GM12878 (cell line): ENCODE measurements at regions of chr9 and their contacts with region 1.

Region 1: GRCh38 chr9:97468658-97469448 is 32.6 kb upstream of the TMOD1 start:
- DNase-seq: peak; percentile 59
- ATAC-seq: peak; percentile 99
- H3K4me3 ChIP-seq: no peak overlapping the region; the same call in 1 of the 2 replicates
- H3K27ac ChIP-seq: peak overlapping the region; percentile 74
- H3K4me1 ChIP-seq: peaks cover 18% of the 10 kb centered on the region
- H3K27me3 ChIP-seq: no peaks in the 10 kb centered on the region
- CTCF ChIP-seq: peak; percentile 83 to 94 (median 92)
- EP300 ChIP-seq: no peak
- POLR2A ChIP-seq: no peak
- RAD21 ChIP-seq: peak; percentile 97

Region 2: GRCh38 chr9:96854073-96854876 is 614.6 kb before region 1 on chr9 and contains the start of gene ZNF782:
- CTCF ChIA-PET with region 1: interaction called, 46 read pairs
- POLR2A ChIA-PET with region 1: no interaction called
- RAD21 ChIA-PET with region 1: interaction called, 14 read pairs
- SMC1A ChIA-PET with region 1: interaction called, 12 read pairs
- in situ Hi-C with region 1: no loop called
- intact Hi-C with region 1: loop called (anchors 5 kb)
- DNase-seq: peak; percentile 60
- ATAC-seq: peak; percentile 96
- H3K4me3 ChIP-seq: peak within 1 kb of the TSS; percentile 83
- H3K27ac ChIP-seq: peak within 1 kb of the TSS; percentile 45
- H3K4me1 ChIP-seq: 0 out of 2 replicates have a peak, but pooled peaks cover 7% of the 10 kb centered on the region
- H3K27me3 ChIP-seq: no peaks in the 10 kb centered on the region
- CTCF ChIP-seq: no peak
- EP300 ChIP-seq: no peak
- POLR2A ChIP-seq: peak; percentile 58; the same call in 1 of the 2 replicates
- RAD21 ChIP-seq: no peak
- polyA plus RNA-seq, gene ZNF782: 0.55 to 0.82 TPM

Region 3: GRCh38 chr9:97321711-97322504 is 146.9 kb before region 1 on chr9:
- CTCF ChIA-PET with region 1: no interaction called
- POLR2A ChIA-PET with region 1: no interaction called
- RAD21 ChIA-PET with region 1: no interaction called
- SMC1A ChIA-PET with region 1: no interaction called
- in situ Hi-C with region 1: no loop called
- intact Hi-C with region 1: no loop called
- DNase-seq: no peak
- ATAC-seq: no peak
- H3K4me3 ChIP-seq: no peak overlapping the region
- H3K27ac ChIP-seq: no peak overlapping the region
- H3K4me1 ChIP-seq: no peaks in the 10 kb centered on the region
- H3K27me3 ChIP-seq: no peaks in the 10 kb centered on the region; a peak in 2 of 4 replicates
- CTCF ChIP-seq: no peak
- EP300 ChIP-seq: no peak
- POLR2A ChIP-seq: no peak
- RAD21 ChIP-seq: no peak

Region 4: DNA sequence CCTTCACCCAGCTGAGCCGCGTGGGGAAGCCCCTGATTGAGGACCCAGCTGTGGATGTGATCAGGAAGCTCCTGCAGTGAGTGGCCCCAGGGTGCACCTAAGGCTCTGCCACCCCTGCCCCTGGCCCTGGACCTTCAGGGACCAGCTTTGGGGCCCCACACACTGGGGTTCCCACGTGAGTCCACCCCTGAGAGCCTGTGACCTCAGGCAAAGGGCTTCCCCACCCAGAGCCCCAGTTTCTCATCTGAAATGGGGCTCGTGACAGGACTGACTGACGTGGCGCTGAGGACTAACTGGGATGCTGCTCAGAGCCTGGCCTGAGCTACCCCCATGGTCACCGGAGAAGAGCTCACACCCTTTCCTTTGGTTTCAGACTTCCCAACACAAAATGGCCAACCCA is 107.0 kb before region 1 on chr9:
- CTCF ChIA-PET with region 1: no interaction called
- POLR2A ChIA-PET with region 1: no interaction called
- RAD21 ChIA-PET with region 1: no interaction called
- SMC1A ChIA-PET with region 1: no interaction called
- in situ Hi-C with region 1: no loop called
- intact Hi-C with region 1: no loop called
- DNase-seq: no peak
- ATAC-seq: no peak
- H3K4me3 ChIP-seq: no peak overlapping the region
- H3K27ac ChIP-seq: no peak overlapping the region
- H3K4me1 ChIP-seq: peaks cover 43% of the 10 kb centered on the region
- H3K27me3 ChIP-seq: no peaks in the 10 kb centered on the region; a peak in 1 of 4 replicates
- CTCF ChIP-seq: no peak
- EP300 ChIP-seq: no peak
- POLR2A ChIP-seq: no peak
- RAD21 ChIP-seq: no peak

Region 5: DNA sequence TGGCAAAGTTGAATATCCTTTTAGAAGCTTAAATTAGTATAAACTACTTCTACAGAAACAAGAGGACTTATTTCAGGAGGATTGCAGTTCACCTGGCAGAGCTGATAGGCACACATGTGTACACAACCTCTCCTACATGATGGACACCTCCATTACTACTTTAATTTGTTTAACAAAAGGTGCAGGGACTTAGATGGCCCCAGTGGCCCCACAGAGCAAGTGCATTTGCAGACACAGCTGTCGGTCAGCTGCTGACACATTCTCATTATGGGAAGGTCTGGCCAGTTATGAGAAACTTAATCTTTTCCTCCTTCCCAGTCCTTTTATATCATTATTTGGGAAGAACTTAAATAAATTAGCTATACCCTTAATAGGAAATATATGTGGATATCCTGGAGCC is 28.7 kb before region 1 on chr9:
- CTCF ChIA-PET with region 1: interaction called, 12 read pairs
- POLR2A ChIA-PET with region 1: no interaction called
- RAD21 ChIA-PET with region 1: interaction called, 4 read pairs
- SMC1A ChIA-PET with region 1: interaction called, 5 read pairs
- in situ Hi-C with region 1: no loop called
- intact Hi-C with region 1: no loop called
- DNase-seq: no peak
- ATAC-seq: no peak
- H3K4me3 ChIP-seq: no peak overlapping the region
- H3K27ac ChIP-seq: no peak overlapping the region
- H3K4me1 ChIP-seq: no peaks in the 10 kb centered on the region
- H3K27me3 ChIP-seq: no peaks in the 10 kb centered on the region
- CTCF ChIP-seq: no peak
- EP300 ChIP-seq: no peak
- POLR2A ChIP-seq: no peak
- RAD21 ChIP-seq: no peak

Region 6: GRCh38 chr9:97510797-97511761 is 42.2 kb after region 1 on chr9:
- CTCF ChIA-PET with region 1: interaction called, 247 read pairs
- POLR2A ChIA-PET with region 1: interaction called, 7 read pairs
- RAD21 ChIA-PET with region 1: interaction called, 38 read pairs
- SMC1A ChIA-PET with region 1: interaction called, 144 read pairs
- in situ Hi-C with region 1: no loop called
- intact Hi-C with region 1: no loop called
- DNase-seq: peak; percentile 84
- ATAC-seq: peak; percentile 91
- H3K4me3 ChIP-seq: peak overlapping the region; percentile 25; the same call in 1 of the 2 replicates
- H3K27ac ChIP-seq: peak overlapping the region; percentile 87
- H3K4me1 ChIP-seq: peaks cover 44% of the 10 kb centered on the region
- H3K27me3 ChIP-seq: no peaks in the 10 kb centered on the region
- CTCF ChIP-seq: no peak
- EP300 ChIP-seq: peak; percentile 63 to 93
- POLR2A ChIP-seq: no peak
- RAD21 ChIP-seq: no peak

Region 7: DNA sequence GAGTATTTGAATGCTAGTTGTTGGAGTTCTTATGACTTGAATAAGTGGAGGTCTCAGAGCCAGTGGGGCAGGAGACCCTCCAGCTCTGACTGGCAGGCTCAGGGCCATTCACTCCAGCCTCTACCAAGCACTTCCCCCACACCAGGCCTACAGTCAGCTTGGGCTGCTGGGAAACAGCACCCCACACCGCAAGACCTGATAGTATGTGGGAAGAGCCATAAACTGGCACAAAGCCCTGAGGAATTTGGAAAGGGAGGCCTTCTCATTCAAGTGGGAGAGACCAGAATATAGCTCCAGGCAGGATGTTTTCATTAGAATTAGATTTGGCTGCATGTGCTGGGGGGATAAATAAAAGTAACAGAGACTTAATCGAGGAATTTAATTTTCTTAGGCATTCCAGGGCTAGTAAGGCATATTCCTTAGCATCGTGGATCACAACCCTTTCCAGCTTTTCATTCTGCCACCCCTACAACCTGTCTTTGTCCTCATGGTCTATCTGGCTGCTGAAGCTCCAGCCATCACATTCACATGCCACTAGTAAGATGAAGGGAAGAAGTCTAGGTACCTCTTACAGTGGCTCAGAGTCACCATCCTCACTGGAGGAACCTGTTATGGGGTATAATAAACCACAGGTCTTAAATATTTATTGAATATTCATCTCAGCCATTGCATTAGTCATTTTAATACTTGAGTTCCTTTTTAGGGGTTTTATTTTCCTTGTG is 80.1 kb after region 1 on chr9:
- CTCF ChIA-PET with region 1: interaction called, 4 read pairs
- POLR2A ChIA-PET with region 1: no interaction called
- RAD21 ChIA-PET with region 1: interaction called, 4 read pairs
- SMC1A ChIA-PET with region 1: interaction called, 13 read pairs
- in situ Hi-C with region 1: no loop called
- intact Hi-C with region 1: no loop called
- DNase-seq: no peak
- ATAC-seq: no peak
- H3K4me3 ChIP-seq: no peak overlapping the region
- H3K27ac ChIP-seq: no peak overlapping the region
- H3K4me1 ChIP-seq: no peaks in the 10 kb centered on the region
- H3K27me3 ChIP-seq: no peaks in the 10 kb centered on the region
- CTCF ChIP-seq: no peak
- EP300 ChIP-seq: no peak
- POLR2A ChIP-seq: no peak
- RAD21 ChIP-seq: no peak

Region 8: DNA sequence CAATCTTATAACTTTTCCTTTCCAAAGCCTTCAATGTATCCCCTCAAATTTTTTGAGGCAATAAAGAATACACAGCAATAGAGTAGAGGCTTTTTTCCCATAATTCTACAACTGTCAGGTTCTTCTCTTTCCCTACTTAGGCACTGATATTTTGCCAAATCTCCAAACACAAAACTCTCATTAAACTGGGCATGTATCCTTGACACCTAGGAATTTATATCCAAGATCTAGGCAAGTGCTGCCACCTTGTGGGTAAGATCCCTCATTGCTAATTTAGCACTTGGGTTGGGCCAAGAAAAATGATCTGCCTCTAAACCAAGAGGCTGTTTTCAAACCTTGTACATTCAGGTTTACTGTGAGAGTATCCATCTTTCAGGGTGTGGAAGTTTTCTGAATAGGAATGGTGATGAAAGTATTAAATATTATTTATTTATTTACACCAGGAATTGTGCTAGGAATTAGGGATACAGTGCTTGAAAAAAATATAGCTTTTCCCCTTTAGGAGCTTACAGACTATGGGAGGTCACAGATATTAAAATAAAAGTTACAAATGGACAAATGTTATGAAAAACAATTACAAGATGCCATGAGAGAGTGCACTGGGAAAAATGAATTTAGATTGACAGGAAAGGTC is 146.7 kb after region 1 on chr9:
- CTCF ChIA-PET with region 1: interaction called, 515 read pairs
- POLR2A ChIA-PET with region 1: interaction called, 7 read pairs
- RAD21 ChIA-PET with region 1: interaction called, 270 read pairs
- SMC1A ChIA-PET with region 1: interaction called, 253 read pairs
- in situ Hi-C with region 1: no loop called
- intact Hi-C with region 1: loop called (anchors 1 kb)
- DNase-seq: no peak
- ATAC-seq: peak; percentile 73
- H3K4me3 ChIP-seq: no peak overlapping the region
- H3K27ac ChIP-seq: no peak overlapping the region
- H3K4me1 ChIP-seq: peaks cover 10% of the 10 kb centered on the region; the same call in 1 of the 2 replicates
- H3K27me3 ChIP-seq: no peaks in the 10 kb centered on the region
- CTCF ChIP-seq: peak; percentile 63 to 84 (median 80)
- EP300 ChIP-seq: no peak
- POLR2A ChIP-seq: no peak
- RAD21 ChIP-seq: peak; percentile 86

Region 9: DNA sequence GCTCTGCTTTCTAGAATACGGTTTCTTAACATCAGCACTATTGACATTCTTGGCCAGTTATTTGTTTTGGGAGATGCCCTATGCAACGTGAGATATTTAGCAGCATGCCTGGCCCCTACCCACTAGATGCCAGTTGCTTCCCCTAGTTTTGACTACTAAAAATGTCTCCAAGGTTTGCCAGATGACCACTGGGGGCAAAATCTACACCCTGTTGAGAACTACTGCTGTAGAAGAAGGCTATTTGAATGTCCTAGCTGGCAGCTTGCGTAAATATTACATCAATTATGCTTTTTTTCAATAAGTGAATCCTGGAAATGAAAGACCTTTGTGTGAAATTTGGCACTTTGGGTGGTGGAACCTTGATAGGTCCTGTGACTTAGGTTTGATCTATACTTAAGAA is 169.8 kb after region 1 on chr9:
- CTCF ChIA-PET with region 1: interaction called, 18 read pairs
- POLR2A ChIA-PET with region 1: interaction called, 4 read pairs
- RAD21 ChIA-PET with region 1: interaction called, 9 read pairs
- SMC1A ChIA-PET with region 1: interaction called, 13 read pairs
- in situ Hi-C with region 1: no loop called
- intact Hi-C with region 1: no loop called
- DNase-seq: no peak
- ATAC-seq: peak; percentile 75
- H3K4me3 ChIP-seq: peak overlapping the region; percentile 49; the same call in 1 of the 2 replicates
- H3K27ac ChIP-seq: no peak overlapping the region
- H3K4me1 ChIP-seq: no peaks in the 10 kb centered on the region
- H3K27me3 ChIP-seq: no peaks in the 10 kb centered on the region
- CTCF ChIP-seq: peak; percentile 16 to 41 (median 37); a peak in 4 of 6 replicates
- EP300 ChIP-seq: no peak
- POLR2A ChIP-seq: no peak
- RAD21 ChIP-seq: no peak